HAP-1 (cell line): ENCODE measurements at regions of chr19 and their contacts with region 1.

Region 1: GRCh38 chr19:32570081-32570785 is 10.8 kb upstream of the PDCD5 start:
- DNase-seq: peak; percentile 60 to 76
- H3K4me3 ChIP-seq: no peak overlapping the region
- H3K4me1 ChIP-seq: no peaks in the 10 kb centered on the region
- H3K27me3 ChIP-seq: no peaks in the 10 kb centered on the region

Region 2: DNA sequence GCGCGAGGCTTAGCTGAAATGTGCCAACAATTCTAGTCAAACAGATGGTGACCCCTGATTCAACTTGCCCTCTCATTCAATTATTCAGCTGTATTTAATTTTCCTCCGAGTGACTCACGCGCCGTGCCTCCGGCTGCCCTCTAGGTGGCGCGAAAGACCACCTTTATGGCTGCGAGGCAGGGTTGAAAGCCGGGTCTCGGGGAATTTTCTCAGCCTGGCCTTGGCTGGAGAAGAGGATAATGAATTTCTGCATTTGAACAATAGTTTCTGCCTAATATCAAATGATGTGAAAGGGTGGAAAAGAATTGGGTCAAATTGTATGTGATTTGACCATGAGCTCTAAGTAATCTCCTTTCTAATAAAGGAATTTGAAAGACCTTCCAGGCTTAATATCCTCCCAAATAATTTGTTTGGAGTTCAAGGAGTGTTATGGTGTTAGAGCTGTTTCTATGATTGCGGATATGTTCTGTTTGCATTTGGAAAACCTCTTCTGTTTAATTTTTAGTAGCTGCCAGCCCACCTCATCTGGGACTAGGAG is 1887.2 kb before region 1 on chr19:
- in situ Hi-C with region 1: loop called (anchors 25 kb)
- DNase-seq: peak; percentile 76 to 85
- H3K4me3 ChIP-seq: no peak overlapping the region
- H3K4me1 ChIP-seq: no peaks in the 10 kb centered on the region
- H3K27me3 ChIP-seq: no peaks in the 10 kb centered on the region

Region 3: DNA sequence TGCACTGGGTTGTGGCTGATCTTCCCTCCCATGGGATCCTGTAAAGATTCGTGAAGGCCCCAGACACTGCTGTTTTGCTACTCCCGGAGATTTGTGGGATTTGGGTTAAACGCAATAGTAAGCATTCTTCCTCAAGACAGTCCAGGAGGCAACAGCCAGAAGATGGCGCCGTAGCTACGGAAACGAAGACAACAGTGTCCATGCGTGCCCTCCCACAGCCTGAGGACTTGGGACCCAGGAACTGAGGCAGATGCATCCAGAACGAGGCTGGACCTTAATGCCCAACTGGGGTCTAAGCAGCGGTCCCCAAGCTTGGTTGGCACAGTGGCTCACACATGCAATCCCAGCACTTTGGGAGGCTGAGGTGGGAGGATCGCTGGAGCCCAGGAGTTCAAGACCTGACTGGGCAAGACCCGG is 282.4 kb before region 1 on chr19:
- in situ Hi-C with region 1: loop called (anchors 5 kb)
- DNase-seq: peak; percentile 69 to 87
- H3K4me3 ChIP-seq: no peak overlapping the region
- H3K4me1 ChIP-seq: no peaks in the 10 kb centered on the region
- H3K27me3 ChIP-seq: peaks cover 2% of the 10 kb centered on the region; the same call in 1 of the 2 replicates

Region 4: DNA sequence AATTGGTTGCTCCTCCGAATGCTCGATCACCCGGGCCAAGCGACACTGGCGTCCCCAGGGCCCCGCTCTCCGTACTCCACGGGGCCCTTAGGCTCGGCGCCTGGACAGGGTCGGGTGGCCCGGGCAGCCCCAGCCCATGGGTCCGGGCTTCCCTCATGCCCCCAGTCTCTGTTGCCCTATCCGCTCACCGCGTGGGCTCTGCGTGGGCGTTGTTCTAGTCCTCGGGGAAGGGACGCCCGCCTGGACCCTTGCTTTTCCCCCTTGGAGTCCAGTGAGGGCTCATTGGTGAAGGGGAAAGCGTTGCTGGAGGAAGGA is 150.7 kb after region 1 on chr19:
- in situ Hi-C with region 1: no loop called
- DNase-seq: no peak
- H3K4me3 ChIP-seq: no peak overlapping the region
- H3K4me1 ChIP-seq: no peaks in the 10 kb centered on the region
- H3K27me3 ChIP-seq: no peaks in the 10 kb centered on the region